Left lung (tissue), 14 donors: ENCODE measurements at regions of chr10 and their contacts with region 1.

Region 1: DNA sequence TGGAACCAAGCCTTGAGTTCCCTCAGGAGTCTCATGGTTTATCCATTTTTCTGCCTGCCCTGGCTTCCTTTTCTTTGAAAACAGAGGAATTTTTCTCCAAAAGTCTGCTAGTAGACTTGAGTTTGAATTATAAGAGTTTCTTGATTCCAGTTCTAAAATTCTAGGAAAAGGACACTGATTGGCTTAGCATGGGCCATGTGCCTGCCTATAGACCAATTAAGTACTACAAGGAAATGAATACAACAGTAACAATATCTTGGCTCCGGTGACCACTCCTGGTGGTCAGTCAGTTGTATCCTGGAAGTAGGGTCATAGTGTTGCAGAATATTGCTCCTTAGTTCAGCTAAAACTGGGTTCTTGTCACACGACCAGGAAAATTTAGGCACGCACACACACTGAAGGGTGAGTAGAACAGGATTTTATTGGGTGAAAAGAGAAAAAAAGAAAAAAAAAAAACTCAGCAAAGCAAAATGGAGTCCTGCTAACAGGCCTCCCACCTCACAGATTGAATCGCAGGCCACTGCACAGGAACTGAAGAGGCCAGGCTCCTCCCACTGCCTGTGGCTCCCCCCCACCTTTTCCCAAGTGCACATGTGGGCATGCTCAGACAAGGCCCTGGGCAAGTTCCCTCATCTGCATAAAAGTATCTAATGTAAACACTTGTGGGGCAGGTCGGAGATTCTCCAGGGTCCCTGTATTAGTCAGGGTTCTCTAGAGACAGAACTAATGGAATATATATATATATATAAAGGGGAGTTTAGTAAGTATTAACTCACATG is 155.1 kb downstream of the LYZL1 start:
- DNase-seq: no peak
- ATAC-seq: peak; percentile 35
- H3K4me3 ChIP-seq: no peak overlapping the region
- H3K27ac ChIP-seq: no peak overlapping the region
- H3K4me1 ChIP-seq: peaks cover 5 to 11% of the 10 kb centered on the region in 2 donors
- H3K27me3 ChIP-seq: no peaks in the 10 kb centered on the region
- CTCF ChIP-seq: no peak

Region 2: GRCh38 chr10:29392376-29393021 is 51.4 kb before region 1 on chr10:
- intact Hi-C with region 1: loop called in 1 of 2 experiments (anchors 10 kb)
- DNase-seq: peak in 2 of 4 donors; percentile 39 to 61
- ATAC-seq: peak; percentile 84
- H3K4me3 ChIP-seq: no peak overlapping the region
- H3K27ac ChIP-seq: no peak overlapping the region
- H3K4me1 ChIP-seq: no peaks in the 10 kb centered on the region
- H3K27me3 ChIP-seq: no peaks in the 10 kb centered on the region
- CTCF ChIP-seq: peak; percentile 67 to 84